Esophagus squamous epithelium (tissue), 5 donors: ENCODE measurements at regions of chr17 and their contacts with region 1.

Region 1: DNA sequence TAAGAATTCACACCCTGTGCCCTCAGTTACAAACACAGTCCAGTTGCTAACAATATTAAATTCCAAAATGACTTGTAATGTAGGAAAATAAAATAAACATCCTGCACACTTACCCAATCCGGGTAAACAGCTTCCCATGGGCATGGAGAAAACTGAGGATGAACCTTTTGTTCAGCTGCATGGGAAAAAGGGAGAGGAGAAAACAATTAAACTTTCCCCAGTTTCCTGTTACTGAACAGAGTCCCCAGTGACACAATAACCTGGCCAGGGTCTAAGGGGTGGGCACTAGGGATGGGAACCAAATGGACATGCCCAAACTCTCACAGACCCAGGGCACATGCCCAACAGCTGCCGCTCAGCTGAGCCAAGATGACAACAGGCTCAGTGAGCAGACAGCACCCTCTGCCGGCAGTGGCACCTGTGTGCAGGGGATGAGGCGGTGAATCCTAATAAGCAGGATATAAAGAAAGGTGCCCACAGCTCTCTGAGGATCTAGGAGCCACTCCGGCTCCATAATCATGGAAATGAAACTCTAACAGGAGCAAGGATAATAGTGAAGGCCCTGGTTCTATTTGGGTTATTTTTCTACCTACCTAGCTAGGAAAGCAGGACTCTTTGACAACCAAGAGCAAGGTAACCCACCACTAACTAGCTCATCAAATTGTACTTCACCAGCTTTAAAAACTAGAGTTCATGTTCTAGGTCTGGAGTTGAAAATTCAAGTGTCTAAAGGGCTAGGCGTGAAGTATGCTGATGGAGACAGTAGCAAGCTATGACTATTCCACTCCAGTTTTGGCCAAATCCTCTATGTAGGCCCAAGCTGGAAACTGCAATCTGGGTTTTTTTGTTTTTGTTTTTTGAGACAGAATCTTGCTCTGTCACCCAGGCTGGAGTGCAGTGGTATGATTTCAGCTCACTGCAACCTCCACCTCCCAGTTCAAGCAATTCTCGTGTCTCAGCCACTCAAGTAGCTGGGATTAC is 58.8 kb downstream of the SMG6 start:
- DNase-seq: no peak
- H3K4me3 ChIP-seq: no peak overlapping the region
- H3K27ac ChIP-seq: peak overlapping the region in 3 of 4 donors; percentile 47 to 77 (median 76)
- H3K4me1 ChIP-seq: peaks cover 5 to 31% (median 21%) of the 10 kb centered on the region in 3 donors
- H3K27me3 ChIP-seq: no peaks in the 10 kb centered on the region
- CTCF ChIP-seq: peak; percentile 94 to 99 (median 98)
- POLR2A ChIP-seq: no peak

Region 2: GRCh38 chr17:2054512-2055291 is 190.1 kb before region 1 on chr17 and contains the start of gene HIC1:
- intact Hi-C with region 1: loop called (anchors 5 kb)
- DNase-seq: no peak
- H3K4me3 ChIP-seq: peak within 1 kb of the TSS; percentile 48 to 74 (median 60)
- H3K27ac ChIP-seq: peak within 1 kb of the TSS; percentile 77 to 93 (median 90)
- H3K4me1 ChIP-seq: peaks cover 47 to 85% (median 64%) of the 10 kb centered on the region in 3 donors
- H3K27me3 ChIP-seq: peaks cover 0 to 86% (median 7%) of the 10 kb centered on the region in 4 donors
- CTCF ChIP-seq: peak; percentile 95 to 99 (median 98)
- POLR2A ChIP-seq: peak in 2 of 4 donors; percentile 70 to 88
- total RNA-seq, gene HIC1: 2.1 to 14.1 (median 5.9) TPM

Region 3: DNA sequence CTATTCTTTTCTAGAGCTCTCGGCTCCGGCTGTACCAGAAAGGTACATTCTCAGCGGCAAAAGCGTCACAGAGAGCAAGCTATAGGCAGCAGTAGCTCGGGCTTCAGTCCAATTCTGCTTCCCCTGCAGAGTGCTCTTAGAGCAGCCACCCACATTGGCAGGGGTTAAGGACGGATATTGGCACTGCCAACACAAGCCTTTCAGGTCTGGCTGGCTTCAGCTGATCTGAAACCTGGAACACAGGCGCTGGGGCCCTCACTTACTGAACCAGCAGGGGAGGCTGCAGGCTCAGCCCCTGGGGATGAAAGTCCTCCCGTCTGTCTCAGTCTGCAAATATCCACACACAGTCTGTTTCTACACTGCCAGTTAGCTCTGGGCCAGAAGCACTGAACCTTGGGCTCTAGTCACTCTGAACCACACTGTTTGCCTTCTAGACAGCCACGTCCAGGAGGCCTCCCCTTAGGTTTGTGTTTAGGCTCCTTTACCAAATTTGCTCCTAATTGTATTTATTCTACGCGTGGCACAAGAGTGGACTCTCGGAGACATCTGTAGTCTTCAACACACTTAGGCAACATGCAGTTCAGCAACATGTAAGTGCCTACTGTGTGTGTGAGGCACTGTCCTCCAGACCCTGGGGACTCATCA is 149.8 kb before region 1 on chr17:
- intact Hi-C with region 1: loop called (anchors 10 kb)
- DNase-seq: no peak
- H3K4me3 ChIP-seq: no peak overlapping the region
- H3K27ac ChIP-seq: peak overlapping the region; percentile 20 to 67 (median 53)
- H3K4me1 ChIP-seq: peaks cover 11 to 51% (median 23%) of the 10 kb centered on the region in 3 donors
- H3K27me3 ChIP-seq: no peaks in the 10 kb centered on the region
- CTCF ChIP-seq: peak in 5 of 6 experiments; percentile 55 to 88 (median 86)
- POLR2A ChIP-seq: no peak